PC-9 (cell line): ENCODE measurements at regions of chr1 and their contacts with region 1.

Region 1: DNA sequence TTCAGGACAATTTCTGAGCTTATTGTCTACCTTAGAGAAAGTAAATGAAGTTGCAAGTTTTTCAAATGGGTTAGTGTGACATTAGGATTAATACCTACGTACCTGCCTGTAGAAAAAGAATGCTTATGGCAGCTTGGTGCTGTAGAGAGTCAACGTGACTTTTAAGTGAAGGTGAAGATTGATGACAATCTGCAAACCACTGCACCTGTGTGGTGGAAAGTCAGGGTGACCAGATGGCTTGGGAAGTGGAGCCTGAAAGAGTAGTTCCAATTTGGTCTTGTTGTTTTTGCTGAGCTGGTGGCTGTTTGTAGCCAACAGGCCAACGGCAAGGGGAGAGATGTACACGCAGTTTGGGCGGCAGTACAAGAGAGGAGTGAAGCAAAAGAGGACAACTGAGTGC is 78.0 kb upstream of the JAK1 start:
- DNase-seq: no peak
- H3K4me3 ChIP-seq: no peak overlapping the region
- H3K27ac ChIP-seq: no peak overlapping the region
- H3K4me1 ChIP-seq: no peaks in the 10 kb centered on the region
- H3K27me3 ChIP-seq: no peaks in the 10 kb centered on the region
- CTCF ChIP-seq: no peak

Region 2: DNA sequence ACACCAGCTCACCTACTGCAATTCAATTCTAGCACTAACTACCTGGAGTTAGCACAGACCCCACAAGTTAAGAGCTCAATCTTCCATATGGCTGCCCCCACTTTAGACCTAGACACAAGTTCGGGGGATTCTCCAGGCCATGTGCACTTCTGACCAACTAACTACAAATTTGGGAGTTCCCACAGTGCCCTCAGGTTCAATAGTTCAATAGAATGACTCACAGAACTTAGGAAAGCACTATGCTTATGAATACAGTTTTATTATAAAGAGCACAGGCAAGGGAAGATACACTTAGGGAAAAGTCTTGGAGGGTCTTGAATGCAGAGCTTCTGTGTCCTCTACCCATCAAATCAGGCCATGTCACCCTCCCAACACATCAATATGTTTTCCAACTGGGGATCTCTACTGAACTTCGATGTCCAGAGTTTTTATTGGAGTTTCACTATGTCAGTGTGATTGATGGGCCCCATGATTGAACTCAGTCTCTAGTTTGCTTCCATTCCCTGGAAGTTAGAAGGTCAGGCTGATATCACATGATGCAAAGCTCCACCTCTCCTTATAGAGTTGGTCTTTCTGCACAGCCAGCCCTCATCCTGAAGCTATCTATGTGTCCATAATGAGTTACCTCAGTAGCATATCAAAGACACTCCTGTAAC is 253.4 kb before region 1 on chr1:
- CTCF ChIA-PET with region 1: no interaction called
- POLR2A ChIA-PET with region 1: no interaction called
- intact Hi-C with region 1: no loop called
- DNase-seq: no peak
- H3K4me3 ChIP-seq: no peak overlapping the region
- H3K27ac ChIP-seq: no peak overlapping the region
- H3K4me1 ChIP-seq: no peaks in the 10 kb centered on the region
- H3K27me3 ChIP-seq: no peaks in the 10 kb centered on the region
- CTCF ChIP-seq: no peak

Region 3: GRCh38 chr1:64923294-64923721 is 121.1 kb before region 1 on chr1:
- CTCF ChIA-PET with region 1: no interaction called
- POLR2A ChIA-PET with region 1: no interaction called
- intact Hi-C with region 1: no loop called
- DNase-seq: no peak
- H3K4me3 ChIP-seq: no peak overlapping the region
- H3K27ac ChIP-seq: no peak overlapping the region
- H3K4me1 ChIP-seq: peaks cover 27% of the 10 kb centered on the region
- H3K27me3 ChIP-seq: no peaks in the 10 kb centered on the region
- CTCF ChIP-seq: no peak

Region 4: GRCh38 chr1:65027666-65028358 is 16.6 kb before region 1 on chr1:
- CTCF ChIA-PET with region 1: no interaction called
- POLR2A ChIA-PET with region 1: interaction called, 29 read pairs
- intact Hi-C with region 1: no loop called
- DNase-seq: no peak
- H3K4me3 ChIP-seq: no peak overlapping the region
- H3K27ac ChIP-seq: no peak overlapping the region
- H3K4me1 ChIP-seq: no peaks in the 10 kb centered on the region
- H3K27me3 ChIP-seq: no peaks in the 10 kb centered on the region
- CTCF ChIP-seq: no peak

Region 5: DNA sequence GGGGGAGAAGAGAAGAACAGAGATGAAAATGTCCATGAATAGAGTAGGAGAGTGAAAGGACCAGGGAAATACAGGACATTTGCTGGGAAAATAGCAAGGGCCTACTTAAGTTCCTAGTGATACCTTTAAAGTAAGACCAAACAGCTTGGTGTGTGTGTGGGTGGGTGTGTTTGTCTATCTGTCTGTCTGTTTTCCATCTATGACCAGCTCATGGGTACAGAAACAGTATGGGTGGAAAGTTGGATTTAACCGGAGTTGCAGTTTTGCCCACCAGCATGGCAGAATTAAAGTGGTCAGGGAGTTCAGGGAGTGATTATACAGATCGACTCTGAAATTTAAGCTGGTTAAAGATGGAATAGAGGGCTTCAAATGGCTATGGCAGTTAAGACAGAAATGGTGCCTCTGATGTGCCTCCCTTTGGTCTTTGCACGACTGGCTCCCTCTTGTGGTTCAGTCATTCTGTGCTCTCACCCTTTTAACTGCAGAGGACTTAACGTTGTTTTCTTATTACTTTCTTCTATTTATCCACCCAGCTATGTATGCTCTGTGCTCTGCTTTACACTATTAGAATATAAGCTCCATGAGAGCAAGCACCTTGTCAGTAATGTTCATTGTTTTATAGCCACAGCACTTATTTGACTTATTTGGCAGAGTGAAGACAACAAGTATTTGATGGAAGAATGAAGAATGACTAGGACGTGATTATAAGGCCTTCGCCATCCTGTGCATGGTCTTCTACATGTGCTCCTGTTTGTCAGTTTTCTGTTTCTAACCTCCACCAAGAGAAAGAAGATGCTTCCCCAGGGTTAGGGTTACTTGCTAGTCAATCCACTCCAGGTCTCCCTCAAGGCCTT is 31.0 kb after region 1 on chr1:
- CTCF ChIA-PET with region 1: no interaction called
- POLR2A ChIA-PET with region 1: no interaction called
- intact Hi-C with region 1: no loop called
- DNase-seq: peak; percentile 29 to 45
- H3K4me3 ChIP-seq: no peak overlapping the region
- H3K27ac ChIP-seq: no peak overlapping the region
- H3K4me1 ChIP-seq: no peaks in the 10 kb centered on the region
- H3K27me3 ChIP-seq: no peaks in the 10 kb centered on the region
- CTCF ChIP-seq: peak; percentile 69